ENCODE measurements at regions of chr6 and their contacts with region 1.

Region 1: DNA sequence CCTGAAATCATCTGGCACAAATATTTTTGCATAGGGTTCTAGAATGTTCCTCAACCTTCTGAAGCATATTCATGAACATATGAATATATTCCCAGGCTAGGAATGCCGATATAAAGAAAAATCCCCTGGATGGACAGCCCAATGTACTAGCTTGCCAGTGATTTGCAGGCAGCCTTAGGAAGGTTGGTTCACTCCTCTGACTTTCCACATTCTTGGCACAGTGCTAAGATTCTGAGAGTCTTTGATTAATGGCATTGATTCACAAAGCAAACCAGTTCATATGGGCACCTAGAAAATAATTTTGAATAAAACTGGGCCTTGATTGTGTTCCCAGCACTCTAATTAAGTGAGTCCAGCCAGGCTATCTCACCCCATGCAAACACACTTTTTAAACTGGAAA is 56.9 kb upstream of the ENPP4 start:
- DNase-seq: no peak
- H3K4me3 ChIP-seq: no peak overlapping the region
- H3K27ac ChIP-seq: no peak overlapping the region
- H3K4me1 ChIP-seq: no peaks in the 10 kb centered on the region
- H3K27me3 ChIP-seq: no peaks in the 10 kb centered on the region
- CTCF ChIP-seq: no peak

Region 2: GRCh38 chr6:46023216-46023915 is 49.5 kb before region 1 on chr6:
- CTCF ChIA-PET with region 1: no interaction called
- POLR2A ChIA-PET with region 1: no interaction called
- intact Hi-C with region 1: loop called (anchors 2 kb)
- DNase-seq: no peak
- H3K4me3 ChIP-seq: no peak overlapping the region
- H3K27ac ChIP-seq: no peak overlapping the region
- H3K4me1 ChIP-seq: no peaks in the 10 kb centered on the region
- H3K27me3 ChIP-seq: 0 out of 2 replicates have a peak, but pooled peaks cover 6% of the 10 kb centered on the region
- CTCF ChIP-seq: no peak

Measured in PC-9 (cell line).